Activated CD4-positive, alpha-beta memory T cell treated with anti-CD3 and anti-CD28 coated beads for 36 hours (primary cell): ENCODE measurements at regions of chr3 and their contacts with region 1.

Region 1: DNA sequence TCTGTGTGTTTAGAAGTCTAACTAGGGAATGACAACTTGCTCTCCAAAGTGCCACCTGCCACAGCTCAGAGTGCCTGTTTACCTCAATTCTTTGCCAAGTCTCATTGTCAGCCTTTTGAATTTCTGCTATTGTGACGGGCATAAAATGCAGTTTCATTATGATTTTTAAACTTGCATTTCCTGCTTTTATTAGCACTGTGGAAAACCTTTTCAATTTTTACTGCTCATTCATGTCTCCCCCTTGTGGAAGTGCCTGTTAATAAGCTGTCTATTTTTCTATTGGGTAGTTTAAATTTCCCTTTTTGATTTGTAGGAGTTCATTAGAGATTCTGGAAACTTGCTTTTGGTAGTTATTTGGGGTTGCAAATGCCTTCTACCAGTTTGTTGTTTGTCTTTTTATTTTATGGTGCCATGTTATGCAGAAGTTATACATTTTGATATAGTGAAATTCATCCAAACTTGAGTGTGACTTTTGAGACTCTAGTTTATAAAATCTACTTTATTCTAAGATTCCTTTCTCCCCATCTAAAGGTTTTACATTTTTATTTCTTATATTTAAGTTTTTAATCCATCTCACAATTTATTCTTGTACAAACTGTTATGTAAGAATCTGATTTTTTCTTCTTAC is 53.9 kb upstream of the FRMD4B start:
- DNase-seq: peak; percentile 15
- H3K4me3 Mint-ChIP-seq: no peak overlapping the region
- H3K27ac Mint-ChIP-seq: no peak overlapping the region
- H3K4me1 Mint-ChIP-seq: peaks cover 47% of the 10 kb centered on the region
- H3K27me3 Mint-ChIP-seq: no peaks in the 10 kb centered on the region

Region 2: GRCh38 chr3:68996356-68996995 is 443.3 kb before region 1 on chr3:
- CTCF ChIA-PET with region 1: no interaction called
- POLR2A ChIA-PET with region 1: no interaction called
- intact Hi-C with region 1: loop called (anchors 10 kb)
- DNase-seq: peak; percentile 50
- H3K4me3 Mint-ChIP-seq: no peak overlapping the region
- H3K27ac Mint-ChIP-seq: peak overlapping the region; percentile 56
- H3K4me1 Mint-ChIP-seq: peaks cover 21% of the 10 kb centered on the region
- H3K27me3 Mint-ChIP-seq: no peaks in the 10 kb centered on the region

Region 3: GRCh38 chr3:69425261-69425660 is 14.5 kb before region 1 on chr3:
- CTCF ChIA-PET with region 1: interaction called, 7 read pairs
- POLR2A ChIA-PET with region 1: no interaction called
- intact Hi-C with region 1: loop called (anchors 2 kb)
- DNase-seq: peak; percentile 57
- H3K4me3 Mint-ChIP-seq: no peak overlapping the region
- H3K27ac Mint-ChIP-seq: no peak overlapping the region
- H3K4me1 Mint-ChIP-seq: peaks cover 2% of the 10 kb centered on the region
- H3K27me3 Mint-ChIP-seq: peaks cover 2% of the 10 kb centered on the region

Region 4: GRCh38 chr3:69463531-69463930 is 23.8 kb after region 1 on chr3:
- CTCF ChIA-PET with region 1: no interaction called
- POLR2A ChIA-PET with region 1: no interaction called
- intact Hi-C with region 1: no loop called
- DNase-seq: no peak
- H3K4me3 Mint-ChIP-seq: no peak overlapping the region
- H3K27ac Mint-ChIP-seq: no peak overlapping the region
- H3K4me1 Mint-ChIP-seq: no peaks in the 10 kb centered on the region
- H3K27me3 Mint-ChIP-seq: peaks cover 2% of the 10 kb centered on the region

Region 5: DNA sequence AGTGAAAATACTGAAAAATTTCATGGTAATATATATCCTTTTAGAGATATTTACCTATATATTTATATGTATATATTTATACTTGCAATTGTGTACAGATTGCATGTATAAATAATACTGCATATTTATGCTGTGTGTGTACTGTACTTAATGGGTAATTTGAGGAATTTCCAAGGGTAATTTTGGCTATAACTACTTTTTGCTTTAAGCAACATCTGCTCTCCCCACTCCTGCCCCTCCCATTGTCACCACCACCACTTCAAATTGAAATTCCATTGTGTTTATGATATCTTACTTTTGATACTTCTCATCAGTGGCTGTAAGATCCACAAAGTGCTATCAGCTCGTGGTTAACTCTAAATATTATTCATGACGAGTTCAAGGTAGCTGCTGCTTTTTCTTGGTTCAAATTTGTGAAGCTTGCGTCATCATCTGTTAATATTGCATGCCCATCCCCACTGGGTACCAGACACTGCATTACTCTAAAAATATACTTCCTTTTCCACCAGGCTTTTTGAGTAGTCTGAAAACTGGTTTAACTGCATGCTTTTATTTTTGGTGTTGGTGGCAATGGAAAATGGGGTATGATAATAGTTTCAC is 207.9 kb after region 1 on chr3:
- CTCF ChIA-PET with region 1: no interaction called
- POLR2A ChIA-PET with region 1: no interaction called
- intact Hi-C with region 1: no loop called
- DNase-seq: no peak
- H3K4me3 Mint-ChIP-seq: no peak overlapping the region
- H3K27ac Mint-ChIP-seq: no peak overlapping the region
- H3K4me1 Mint-ChIP-seq: no peaks in the 10 kb centered on the region
- H3K27me3 Mint-ChIP-seq: no peaks in the 10 kb centered on the region